ENCODE measurements at regions of chr6 and their contacts with region 1.

Region 1: GRCh38 chr6:168956884-168957730 is 296.5 kb downstream of the THBS2 start:
- DNase-seq: peak; percentile 82 to 91
- ATAC-seq: peak; percentile 90
- H3K4me3 ChIP-seq: no peak overlapping the region
- H3K27ac ChIP-seq: no peak overlapping the region
- H3K4me1 ChIP-seq: no peaks in the 10 kb centered on the region
- H3K27me3 ChIP-seq: no peaks in the 10 kb centered on the region

Region 2: GRCh38 chr6:169070506-169071176 is 113.5 kb after region 1 on chr6:
- intact Hi-C with region 1: no loop called
- DNase-seq: peak; percentile 94 to 95
- ATAC-seq: peak; percentile 96
- H3K4me3 ChIP-seq: no peak overlapping the region
- H3K27ac ChIP-seq: peak overlapping the region; percentile 83 to 89
- H3K4me1 ChIP-seq: no peaks in the 10 kb centered on the region
- H3K27me3 ChIP-seq: no peaks in the 10 kb centered on the region

Region 3: GRCh38 chr6:169240591-169241390 is 283.7 kb after region 1 on chr6:
- intact Hi-C with region 1: loop called in 1 of 2 experiments (anchors 10 kb)
- DNase-seq: peak in 1 of 2 donors; percentile 70
- ATAC-seq: no peak
- H3K4me3 ChIP-seq: no peak overlapping the region
- H3K27ac ChIP-seq: peak overlapping the region in 1 of 2 donors; percentile 65
- H3K4me1 ChIP-seq: no peaks in the 10 kb centered on the region
- H3K27me3 ChIP-seq: no peaks in the 10 kb centered on the region

Region 4: DNA sequence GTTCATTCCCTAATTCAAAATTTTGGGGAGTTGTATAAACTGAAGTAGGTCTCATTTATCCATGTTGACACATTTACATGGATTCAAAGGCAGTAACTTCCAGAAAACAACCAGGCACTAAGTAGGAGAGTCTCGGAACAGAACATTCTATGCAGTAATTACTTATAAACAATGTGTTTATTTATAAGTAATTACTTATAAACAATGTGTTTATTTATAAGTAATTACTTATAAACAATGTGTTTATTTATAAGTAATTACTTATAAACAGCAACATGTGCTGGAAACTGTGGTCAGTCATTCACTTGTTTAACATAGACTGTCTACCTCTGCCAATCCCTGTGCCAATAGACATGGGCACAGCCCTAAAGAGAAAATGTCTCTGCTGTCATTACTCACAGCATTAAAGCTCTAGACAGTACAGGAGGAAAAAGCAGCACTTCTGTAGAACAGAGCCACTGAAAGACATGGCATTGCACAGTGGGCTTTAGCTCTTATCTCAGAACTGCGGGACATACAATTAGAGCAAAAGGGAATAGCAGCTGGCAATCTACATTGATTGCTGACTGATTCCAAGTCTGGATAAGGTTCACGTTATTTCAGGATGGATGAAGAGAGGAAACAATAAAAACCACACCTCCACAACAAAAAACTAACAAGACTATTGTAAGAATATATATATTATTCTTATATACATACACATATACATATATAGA is 556.5 kb after region 1 on chr6:
- intact Hi-C with region 1: loop called in 1 of 2 experiments (anchors 10 kb)
- DNase-seq: no peak
- ATAC-seq: no peak
- H3K4me3 ChIP-seq: no peak overlapping the region
- H3K27ac ChIP-seq: no peak overlapping the region
- H3K4me1 ChIP-seq: no peaks in the 10 kb centered on the region
- H3K27me3 ChIP-seq: no peaks in the 10 kb centered on the region

Region 5: GRCh38 chr6:169520104-169520503 is 563.0 kb after region 1 on chr6:
- intact Hi-C with region 1: loop called (anchors 1 to 10 kb)
- DNase-seq: no peak
- ATAC-seq: no peak
- H3K4me3 ChIP-seq: no peak overlapping the region
- H3K27ac ChIP-seq: no peak overlapping the region
- H3K4me1 ChIP-seq: no peaks in the 10 kb centered on the region
- H3K27me3 ChIP-seq: no peaks in the 10 kb centered on the region

Region 6: DNA sequence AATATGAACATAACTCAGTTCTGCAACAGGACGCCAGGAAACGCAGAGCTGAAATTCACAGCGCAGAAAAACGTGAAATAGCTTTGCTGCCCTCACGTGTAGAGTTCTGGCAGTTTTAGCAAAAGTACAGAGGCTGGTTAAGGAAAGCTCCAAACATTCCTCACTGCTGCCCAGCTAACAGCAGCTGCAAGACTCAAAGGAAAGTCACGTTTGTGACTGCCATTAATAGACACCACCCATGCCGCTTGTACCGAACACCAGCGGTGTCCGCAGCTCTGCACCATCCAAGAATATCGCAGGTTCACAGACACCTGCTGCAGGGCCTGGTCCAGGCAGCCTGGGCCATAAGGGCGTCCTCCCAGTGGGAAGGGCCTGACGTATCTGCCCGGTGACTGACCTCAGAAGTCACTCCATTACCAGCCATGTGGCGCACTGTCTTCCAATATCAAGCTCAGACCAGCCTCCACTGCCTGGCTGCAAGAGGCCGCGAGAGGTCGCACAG is 683.3 kb after region 1 on chr6:
- intact Hi-C with region 1: loop called in 1 of 2 experiments (anchors 5 kb)
- DNase-seq: no peak
- ATAC-seq: peak; percentile 47
- H3K4me3 ChIP-seq: no peak overlapping the region
- H3K27ac ChIP-seq: no peak overlapping the region
- H3K4me1 ChIP-seq: no peaks in the 10 kb centered on the region
- H3K27me3 ChIP-seq: no peaks in the 10 kb centered on the region

Measured in aorta (tissue), 5 donors.